Lower leg skin (tissue), 4 donors: ENCODE measurements at regions of chr3 and their contacts with region 1.

Region 1: GRCh38 chr3:13495921-13496723 is 16.0 kb downstream of the HDAC11 start:
- DNase-seq: peak; percentile 84 to 96
- H3K4me3 ChIP-seq: no peak overlapping the region
- CTCF ChIP-seq: peak in 2 of 3 donors; percentile 77 to 79
- POLR2A ChIP-seq: no peak

Region 2: DNA sequence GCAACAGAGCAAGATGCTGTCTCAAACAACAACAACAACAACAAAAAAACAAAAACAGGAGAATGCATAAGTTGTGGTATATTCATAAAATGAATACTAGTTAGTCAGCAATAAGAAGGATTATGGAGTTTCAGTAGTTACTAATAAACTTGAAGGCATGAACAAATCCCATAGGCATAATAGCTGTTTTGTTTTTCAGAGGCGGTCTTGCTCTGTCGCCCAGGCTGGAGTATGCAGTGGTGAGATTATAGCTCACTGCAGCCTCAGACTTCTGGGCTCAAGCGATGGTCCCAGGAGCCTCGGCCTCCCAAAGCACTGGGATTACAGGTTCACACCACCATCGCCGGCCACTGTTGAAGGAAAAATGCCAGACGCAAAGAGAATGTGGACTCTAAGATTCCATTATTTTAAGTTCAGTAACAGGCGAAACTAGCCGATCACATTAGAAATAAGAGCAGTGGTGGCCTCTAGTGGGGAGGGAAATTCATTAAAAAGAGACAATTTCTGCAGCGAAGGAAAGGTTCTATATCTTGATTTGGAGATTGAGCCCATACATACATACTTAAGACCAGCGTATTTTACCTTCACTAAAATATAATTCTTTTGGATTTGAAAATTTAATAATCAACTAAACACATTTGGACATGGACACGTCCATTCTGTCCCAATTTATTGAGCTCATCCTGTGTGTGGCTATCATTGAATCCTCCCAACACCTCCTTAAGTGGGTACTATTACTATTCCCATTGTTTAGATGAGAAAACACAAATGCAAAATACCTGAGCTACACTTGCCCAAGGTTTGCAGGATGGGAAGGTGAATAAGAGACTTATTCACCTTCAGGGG is 43.4 kb before region 1 on chr3:
- intact Hi-C with region 1: no loop called
- DNase-seq: no peak
- H3K4me3 ChIP-seq: no peak overlapping the region
- CTCF ChIP-seq: peak in 1 of 3 donors; percentile 10
- POLR2A ChIP-seq: no peak

Region 3: GRCh38 chr3:13879655-13880204 is 383.6 kb after region 1 on chr3 and contains the start of gene WNT7A:
- intact Hi-C with region 1: loop called (anchors 10 kb)
- DNase-seq: no peak
- H3K4me3 ChIP-seq: no peak within 1 kb of the TSS
- CTCF ChIP-seq: no peak
- POLR2A ChIP-seq: no peak
- total RNA-seq, gene WNT7A: 0.49 to 2.4 (median 0.68) TPM